ENCODE measurements at regions of chr2 and their contacts with region 1.

Region 1: DNA sequence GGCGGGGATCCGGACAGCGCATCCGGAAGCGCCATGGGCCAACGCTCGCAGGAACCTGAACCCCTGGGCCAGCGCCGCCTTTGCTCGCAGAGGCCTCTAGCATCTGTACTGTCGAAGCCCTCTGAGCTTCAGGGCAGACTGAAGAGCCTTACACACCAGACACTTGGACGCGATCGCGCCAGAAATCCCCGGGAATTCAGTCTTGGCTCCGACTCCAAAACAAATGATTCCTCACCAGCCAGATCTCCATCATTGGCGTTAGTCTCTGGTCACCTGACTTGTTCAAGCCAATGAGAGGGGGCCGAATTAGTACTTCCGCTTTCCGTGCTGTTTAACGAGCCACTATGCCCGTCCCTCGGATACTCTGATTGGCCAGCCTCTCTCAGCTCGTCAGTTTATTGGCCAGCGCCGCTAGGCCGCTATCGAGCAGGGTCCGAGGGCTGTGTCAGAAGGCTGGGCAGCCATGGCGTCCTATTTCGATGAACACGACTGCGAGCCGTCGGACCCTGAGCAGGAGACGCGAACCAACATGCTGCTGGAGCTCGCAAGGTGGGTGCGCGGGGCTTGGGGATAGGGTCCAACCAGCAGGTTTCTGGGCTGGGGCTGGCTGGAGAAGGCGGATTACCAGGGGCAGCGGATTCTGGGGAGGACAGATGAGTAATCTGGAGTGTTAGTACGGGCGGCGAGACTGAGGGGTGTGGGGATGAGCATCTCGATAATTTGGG is at the start of gene RNF181:
- DNase-seq: peak; percentile 96
- H3K4me3 Mint-ChIP-seq: peak within 1 kb of the TSS; percentile 97
- H3K27ac Mint-ChIP-seq: peak within 1 kb of the TSS; percentile 95
- H3K4me1 Mint-ChIP-seq: peaks cover 23% of the 10 kb centered on the region
- H3K27me3 Mint-ChIP-seq: no peaks in the 10 kb centered on the region
- total RNA-seq, gene RNF181: 120 to 124 TPM

Region 2: DNA sequence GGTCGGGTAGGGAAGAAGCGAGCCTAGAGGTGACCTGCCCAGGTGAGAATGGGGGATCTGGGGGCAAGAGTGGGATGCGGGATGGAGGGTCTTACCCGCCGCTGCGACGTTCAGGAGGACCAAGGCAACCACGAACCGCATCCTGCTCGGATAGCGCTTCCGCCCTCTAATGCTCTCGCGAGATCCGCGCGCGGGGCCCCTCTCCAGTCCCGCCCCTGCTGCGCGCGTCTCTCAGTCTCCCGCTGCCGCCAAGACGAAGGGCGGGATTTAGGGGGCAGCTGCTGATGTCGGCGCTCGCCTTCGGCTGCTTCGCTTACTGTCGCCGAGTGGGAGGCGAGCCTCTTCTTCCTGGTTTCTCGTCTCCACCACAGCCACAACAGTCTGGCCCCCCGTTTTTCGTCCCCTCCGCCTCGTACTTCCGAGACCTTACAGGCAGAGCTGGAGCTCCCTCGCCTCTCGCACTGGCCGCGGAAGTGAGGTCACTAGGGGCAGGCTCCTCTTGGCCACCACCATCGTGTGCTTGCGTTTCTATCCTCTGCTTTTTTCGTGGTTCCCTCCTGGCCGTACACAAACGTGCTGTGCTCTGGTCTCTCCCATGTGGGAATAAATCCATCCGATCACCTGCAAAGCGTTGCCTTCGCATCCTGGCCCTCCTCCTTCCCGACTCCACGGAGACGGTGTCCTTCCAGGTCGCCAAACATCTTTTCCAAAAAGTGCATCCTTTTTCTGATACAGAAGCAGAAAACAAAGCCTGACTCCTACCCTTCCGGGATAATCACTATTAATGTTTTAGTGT is 267.4 kb before region 1 on chr2 and contains the start of gene TGOLN2:
- CTCF ChIA-PET with region 1: no interaction called
- POLR2A ChIA-PET with region 1: interaction called, 4 read pairs
- intact Hi-C with region 1: loop called (anchors 5 kb)
- DNase-seq: peak; percentile 95
- H3K4me3 Mint-ChIP-seq: peak within 1 kb of the TSS; percentile 98
- H3K27ac Mint-ChIP-seq: peak within 1 kb of the TSS; percentile 99
- H3K4me1 Mint-ChIP-seq: peaks cover 40% of the 10 kb centered on the region
- H3K27me3 Mint-ChIP-seq: no peaks in the 10 kb centered on the region
- total RNA-seq, gene TGOLN2: 84.8 to 85.9 TPM

Region 3: GRCh38 chr2:85551698-85552678 is 43.5 kb before region 1 on chr2:
- CTCF ChIA-PET with region 1: interaction called, 14 read pairs
- POLR2A ChIA-PET with region 1: no interaction called
- intact Hi-C with region 1: no loop called
- DNase-seq: peak; percentile 91
- H3K4me3 Mint-ChIP-seq: no peak overlapping the region
- H3K27ac Mint-ChIP-seq: no peak overlapping the region
- H3K4me1 Mint-ChIP-seq: peaks cover 3% of the 10 kb centered on the region
- H3K27me3 Mint-ChIP-seq: no peaks in the 10 kb centered on the region

Region 4: GRCh38 chr2:85577386-85578242 is 17.8 kb before region 1 on chr2 and contains the start of gene VAMP8:
- CTCF ChIA-PET with region 1: interaction called, 6 read pairs
- POLR2A ChIA-PET with region 1: interaction called, 20 read pairs
- intact Hi-C with region 1: loop called (anchors 2 kb)
- DNase-seq: peak; percentile 83
- H3K4me3 Mint-ChIP-seq: peak within 1 kb of the TSS; percentile 95
- H3K27ac Mint-ChIP-seq: peak within 1 kb of the TSS; percentile 87
- H3K4me1 Mint-ChIP-seq: peaks cover 28% of the 10 kb centered on the region
- H3K27me3 Mint-ChIP-seq: no peaks in the 10 kb centered on the region
- total RNA-seq, gene VAMP8: 112 to 114 TPM

Region 5: DNA sequence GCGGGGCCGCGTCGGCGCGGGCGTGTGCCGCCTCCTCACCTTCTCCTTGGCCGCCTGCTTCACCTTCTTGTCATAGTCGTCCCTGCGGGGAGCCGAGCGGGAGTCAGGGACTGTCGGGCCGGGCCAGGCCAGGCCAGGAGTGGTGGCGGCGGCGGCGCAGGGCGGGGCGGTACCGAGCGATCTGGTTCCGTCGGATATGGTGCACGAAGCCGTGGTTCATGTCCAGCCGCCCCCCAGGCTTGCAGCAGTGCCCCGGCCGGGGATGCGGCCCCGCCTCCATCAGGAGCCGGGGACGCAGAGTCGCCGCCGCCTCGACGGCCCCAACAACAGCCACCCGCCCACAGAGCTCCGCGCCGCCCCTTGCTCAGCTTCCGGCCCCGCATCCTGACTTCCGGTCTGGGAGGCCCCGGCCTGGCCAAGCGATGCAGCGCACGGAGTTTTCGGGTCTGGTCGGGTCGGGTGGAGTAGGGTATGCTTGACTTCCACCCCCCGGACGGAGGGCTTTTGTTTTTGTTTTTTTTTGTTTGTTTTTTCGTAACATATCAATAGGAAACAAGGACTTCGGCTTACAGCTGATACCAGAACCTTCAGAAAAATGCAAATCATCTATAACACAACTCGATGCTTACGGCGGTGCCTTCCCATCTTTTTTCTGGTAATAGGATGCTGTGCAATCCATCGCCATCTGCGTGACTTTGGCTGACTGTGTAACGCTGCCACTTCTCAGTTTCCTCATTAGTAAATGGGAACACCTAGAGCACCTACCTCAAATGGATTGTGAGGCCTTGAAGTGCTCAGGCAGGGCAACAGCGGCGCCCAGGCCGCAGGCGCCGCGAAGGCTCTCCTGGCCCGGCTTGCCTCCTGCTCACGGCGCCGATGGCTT is 16.5 kb after region 1 on chr2 and contains the start of gene C2orf68:
- CTCF ChIA-PET with region 1: interaction called, 5 read pairs
- POLR2A ChIA-PET with region 1: interaction called, 12 read pairs
- intact Hi-C with region 1: loop called (anchors 1 kb)
- DNase-seq: peak; percentile 94
- H3K4me3 Mint-ChIP-seq: peak within 1 kb of the TSS; percentile 95
- H3K27ac Mint-ChIP-seq: peak within 1 kb of the TSS; percentile 91
- H3K4me1 Mint-ChIP-seq: peaks cover 29% of the 10 kb centered on the region
- H3K27me3 Mint-ChIP-seq: no peaks in the 10 kb centered on the region
- total RNA-seq, gene C2orf68: 36.3 to 39.1 TPM

Measured in activated CD4-positive, alpha-beta memory T cell treated with anti-CD3 and anti-CD28 coated beads for 36 hours (primary cell).